GM10248 (cell line): ENCODE measurements at regions of chr9 and their contacts with region 1.

Region 1: GRCh38 chr9:72721067-72721466 is 199.7 kb downstream of the TMC1 start:
- DNase-seq: no peak
- CTCF ChIP-seq: no peak

Region 2: DNA sequence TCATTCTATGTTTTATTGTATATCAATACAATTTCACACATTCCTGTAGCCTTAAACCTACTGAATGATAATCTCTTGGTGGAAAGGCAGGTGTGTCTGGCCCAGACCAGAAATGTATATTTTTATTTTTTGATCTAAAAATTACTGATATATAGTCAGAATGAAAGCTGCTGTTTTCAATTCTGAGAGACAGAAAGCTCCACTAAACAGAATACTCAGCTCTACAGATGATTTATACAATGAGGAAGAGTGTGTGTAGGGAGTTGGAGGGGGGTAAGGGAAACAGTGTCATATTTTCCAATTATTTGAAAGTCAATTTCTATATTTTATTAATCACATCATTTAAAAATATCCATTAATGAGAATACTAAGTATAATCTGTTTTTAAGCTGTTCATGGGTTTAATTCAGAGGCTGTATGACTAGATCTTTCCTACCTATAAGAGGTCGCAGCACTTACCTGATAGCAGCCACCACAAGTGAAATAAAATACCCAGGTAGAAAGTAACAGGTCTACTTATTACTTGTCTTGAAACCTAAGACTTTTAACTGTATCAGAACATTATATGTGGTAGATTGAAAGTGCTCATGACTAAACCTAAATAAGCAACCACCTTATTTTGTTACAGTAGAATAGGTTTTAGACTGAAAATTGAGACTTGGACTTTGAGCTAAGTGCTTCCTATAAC is 16.2 kb before region 1 on chr9:
- CTCF ChIA-PET with region 1: interaction called, 11 read pairs
- POLR2A ChIA-PET with region 1: no interaction called
- DNase-seq: no peak
- CTCF ChIP-seq: no peak